ENCODE measurements at regions of chr10 and their contacts with region 1.

Region 1: DNA sequence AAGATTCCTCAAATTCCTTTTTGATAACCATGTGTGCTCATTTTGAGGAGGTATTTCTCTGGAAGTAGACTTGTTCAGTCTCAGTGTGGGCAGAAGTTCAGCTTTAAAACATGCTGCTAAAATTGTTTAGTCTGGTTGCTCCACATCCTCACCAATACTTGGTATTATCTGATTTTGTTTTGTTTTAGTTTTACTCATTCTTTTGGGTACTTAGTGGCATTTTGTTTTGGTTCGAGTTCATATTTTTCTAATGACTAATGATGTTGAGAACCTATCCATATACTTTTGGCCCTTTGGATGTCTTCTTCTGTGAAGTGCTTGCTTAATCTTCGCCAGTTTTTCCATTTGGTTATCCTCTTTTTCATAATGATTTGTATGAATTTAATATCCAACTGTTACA is 694.2 kb upstream of the FZD8 start:
- DNase-seq: no peak
- H3K4me3 ChIP-seq: no peak overlapping the region
- H3K27ac ChIP-seq: no peak overlapping the region
- H3K4me1 ChIP-seq: no peaks in the 10 kb centered on the region
- H3K27me3 ChIP-seq: no peaks in the 10 kb centered on the region
- CTCF ChIP-seq: no peak

Region 2: GRCh38 chr10:36194276-36194675 is 142.0 kb before region 1 on chr10:
- CTCF ChIA-PET with region 1: no interaction called
- POLR2A ChIA-PET with region 1: no interaction called
- intact Hi-C with region 1: no loop called
- DNase-seq: no peak
- H3K4me3 ChIP-seq: no peak overlapping the region
- H3K27ac ChIP-seq: no peak overlapping the region
- H3K4me1 ChIP-seq: no peaks in the 10 kb centered on the region
- H3K27me3 ChIP-seq: no peaks in the 10 kb centered on the region
- CTCF ChIP-seq: no peak

Region 3: GRCh38 chr10:36303896-36304295 is 32.4 kb before region 1 on chr10:
- CTCF ChIA-PET with region 1: no interaction called
- POLR2A ChIA-PET with region 1: interaction called, 15 read pairs
- intact Hi-C with region 1: no loop called
- DNase-seq: no peak
- H3K4me3 ChIP-seq: no peak overlapping the region
- H3K27ac ChIP-seq: no peak overlapping the region
- H3K4me1 ChIP-seq: no peaks in the 10 kb centered on the region
- H3K27me3 ChIP-seq: no peaks in the 10 kb centered on the region
- CTCF ChIP-seq: no peak

Region 4: DNA sequence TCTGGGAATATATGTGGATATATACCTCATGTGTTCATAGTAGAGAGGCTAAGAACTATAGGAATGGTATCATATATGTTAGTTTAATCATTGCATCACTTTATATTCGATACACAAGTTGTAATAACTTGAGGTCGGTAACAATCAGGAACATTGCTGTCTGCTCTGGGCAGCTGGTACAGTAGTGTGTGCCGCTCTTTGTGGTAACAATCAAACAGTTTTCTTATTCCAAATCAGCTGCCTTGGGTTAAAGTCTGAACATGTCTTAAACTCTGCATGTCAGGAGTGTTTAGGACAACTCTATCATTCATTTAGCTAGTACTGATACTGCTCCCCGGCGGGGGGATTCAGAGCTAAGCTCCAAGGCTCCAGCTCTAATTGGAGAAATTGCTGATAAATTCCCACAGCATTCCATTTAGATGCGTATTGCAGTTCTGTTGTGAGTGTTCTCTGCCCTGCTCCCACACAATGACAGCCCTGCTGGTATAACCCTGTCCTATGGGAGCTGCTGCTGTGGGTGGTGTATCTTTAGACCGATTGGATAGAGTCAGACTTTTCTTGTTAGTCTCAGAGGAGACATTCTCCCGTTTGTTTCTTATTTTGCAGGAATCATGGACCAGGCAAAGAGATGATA is 13.2 kb after region 1 on chr10:
- CTCF ChIA-PET with region 1: interaction called, 10 read pairs
- POLR2A ChIA-PET with region 1: no interaction called
- intact Hi-C with region 1: no loop called
- DNase-seq: peak; percentile 75
- H3K4me3 ChIP-seq: no peak overlapping the region
- H3K27ac ChIP-seq: no peak overlapping the region
- H3K4me1 ChIP-seq: no peaks in the 10 kb centered on the region
- H3K27me3 ChIP-seq: no peaks in the 10 kb centered on the region
- CTCF ChIP-seq: no peak